Ascending aorta (tissue), 2 donors: ENCODE measurements at regions of chr10 and their contacts with region 1.

Region 1: GRCh38 chr10:75509706-75510105 is 78.3 kb downstream of the LRMDA start:
- DNase-seq: no peak
- H3K4me3 ChIP-seq: no peak overlapping the region
- H3K27ac ChIP-seq: no peak overlapping the region
- H3K4me1 ChIP-seq: peaks cover 13 to 26% of the 10 kb centered on the region in 2 donors
- H3K27me3 ChIP-seq: no peaks in the 10 kb centered on the region
- CTCF ChIP-seq: no peak

Region 2: DNA sequence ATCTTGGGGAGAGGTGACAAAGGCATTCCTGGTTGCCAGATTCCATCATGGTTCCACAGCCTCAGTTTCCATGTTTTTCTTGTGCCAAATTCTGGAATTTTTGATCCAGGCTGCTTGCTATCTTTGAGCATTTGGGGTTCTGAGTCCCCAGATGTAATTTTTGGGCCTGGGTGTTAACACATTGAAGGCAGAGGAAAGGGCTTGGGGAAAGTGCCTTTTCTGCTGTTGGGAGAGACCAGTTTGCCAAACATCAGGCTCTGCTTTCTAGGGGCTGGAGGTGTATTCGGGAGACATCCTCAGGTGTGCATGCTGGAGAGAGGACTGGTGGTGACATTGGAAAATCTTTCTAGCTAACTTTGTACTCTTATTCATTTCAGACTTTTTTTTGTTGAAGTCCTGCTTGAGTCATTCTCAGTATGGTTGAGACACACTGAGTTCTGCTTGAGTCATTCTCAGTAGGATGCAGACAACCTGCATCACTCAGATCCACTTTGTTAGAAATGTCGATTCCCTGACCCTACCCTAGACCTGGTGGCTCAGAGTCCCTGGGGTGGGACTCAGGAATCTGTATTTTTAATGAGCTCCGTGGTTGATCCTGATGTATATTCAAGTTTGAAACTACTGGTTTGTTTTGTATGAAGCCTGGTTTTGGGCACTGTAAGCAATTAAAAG is 22.7 kb after region 1 on chr10:
- intact Hi-C with region 1: loop called (anchors 2 kb)
- DNase-seq: no peak
- H3K4me3 ChIP-seq: no peak overlapping the region
- H3K27ac ChIP-seq: no peak overlapping the region
- H3K4me1 ChIP-seq: peaks cover 0 to 14% of the 10 kb centered on the region in 2 donors
- H3K27me3 ChIP-seq: no peaks in the 10 kb centered on the region
- CTCF ChIP-seq: no peak